ENCODE measurements at regions of chr6 and their contacts with region 1.

Region 1: GRCh38 chr6:52284460-52285176 is at the start of gene MCM3:
- DNase-seq: peak; percentile 99
- ATAC-seq: peak; percentile 97
- H3K4me3 ChIP-seq: peak within 1 kb of the TSS; percentile 88 to 92
- H3K27ac ChIP-seq: peak within 1 kb of the TSS; percentile 81
- H3K4me1 ChIP-seq: peaks cover 4 to 22% of the 10 kb centered on the region in 2 experiments; a peak in 3 of 4 replicates
- H3K27me3 ChIP-seq: no peaks in the 10 kb centered on the region
- CTCF ChIP-seq: no peak
- POLR2A ChIP-seq: no peak
- RAD21 ChIP-seq: no peak
- total RNA-seq, gene MCM3: 191 TPM

Region 2: GRCh38 chr6:52399511-52400312 is 115.1 kb after region 1 on chr6:
- CTCF ChIA-PET with region 1: interaction called, 45 read pairs
- POLR2A ChIA-PET with region 1: no interaction called
- RAD21 ChIA-PET with region 1: interaction called in 1 of 2 experiments, 9 read pairs
- intact Hi-C with region 1: loop called (anchors 1 kb)
- DNase-seq: no peak
- ATAC-seq: peak; percentile 92
- H3K4me3 ChIP-seq: no peak overlapping the region
- H3K27ac ChIP-seq: no peak overlapping the region
- H3K4me1 ChIP-seq: peaks cover 0 to 14% of the 10 kb centered on the region in 2 experiments; a peak in 2 of 4 replicates
- H3K27me3 ChIP-seq: no peaks in the 10 kb centered on the region
- CTCF ChIP-seq: peak; percentile 77 to 88 (median 85)
- POLR2A ChIP-seq: no peak
- RAD21 ChIP-seq: peak; percentile 88

Region 3: DNA sequence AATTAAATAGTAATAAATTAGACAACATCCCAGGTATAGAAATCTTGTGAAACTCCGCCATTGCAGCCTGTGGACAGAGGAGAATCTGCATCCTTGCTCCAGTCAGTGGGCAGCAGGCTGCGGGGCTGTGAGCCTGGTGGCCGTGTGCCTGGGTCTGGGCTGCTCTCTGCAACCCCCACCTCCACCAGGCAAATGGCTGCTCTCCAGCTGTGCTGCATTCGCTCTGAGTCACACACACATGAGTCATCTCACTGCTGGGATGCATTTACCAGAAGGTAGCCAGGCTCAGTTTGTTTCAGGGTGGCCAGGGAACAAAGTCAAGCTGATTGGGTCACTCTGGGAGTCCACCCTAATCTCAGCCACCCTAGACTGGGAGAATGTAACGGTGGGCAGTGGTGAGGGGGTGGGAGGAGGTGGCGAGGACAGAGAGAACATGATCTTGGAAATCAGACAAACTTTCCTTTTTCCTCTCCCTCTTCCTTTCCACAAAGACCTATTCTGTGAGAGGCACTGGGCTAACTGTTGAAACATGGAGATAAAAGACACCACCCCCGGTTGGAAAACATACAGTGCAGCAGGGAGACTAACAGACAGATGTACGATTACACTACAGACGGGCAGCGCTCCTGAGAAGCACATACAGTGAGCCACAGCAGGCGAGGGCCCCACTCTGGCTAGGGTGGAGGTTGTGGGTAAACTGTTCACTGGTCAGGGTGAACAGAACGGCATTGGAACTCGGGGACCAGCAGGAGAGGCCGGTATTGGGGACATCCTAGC is 233.1 kb after region 1 on chr6:
- CTCF ChIA-PET with region 1: no interaction called
- POLR2A ChIA-PET with region 1: no interaction called
- RAD21 ChIA-PET with region 1: no interaction called
- intact Hi-C with region 1: loop called (anchors 10 kb)
- DNase-seq: peak; percentile 80
- ATAC-seq: peak; percentile 89
- H3K4me3 ChIP-seq: peak overlapping the region in 1 of 2 experiments; percentile 36; a peak in 3 of 4 replicates
- H3K27ac ChIP-seq: peak overlapping the region; percentile 73
- H3K4me1 ChIP-seq: peaks cover 55 to 73% of the 10 kb centered on the region in 2 experiments
- H3K27me3 ChIP-seq: no peaks in the 10 kb centered on the region
- CTCF ChIP-seq: no peak
- POLR2A ChIP-seq: no peak
- RAD21 ChIP-seq: peak; percentile 31; the same call in 1 of the 2 replicates

Region 4: GRCh38 chr6:52598123-52598823 is 313.7 kb after region 1 on chr6:
- CTCF ChIA-PET with region 1: no interaction called
- POLR2A ChIA-PET with region 1: no interaction called
- RAD21 ChIA-PET with region 1: no interaction called
- intact Hi-C with region 1: loop called (anchors 10 kb)
- DNase-seq: peak; percentile 69
- ATAC-seq: peak; percentile 95
- H3K4me3 ChIP-seq: no peak overlapping the region
- H3K27ac ChIP-seq: no peak overlapping the region
- H3K4me1 ChIP-seq: peaks cover 0 to 27% of the 10 kb centered on the region in 2 experiments; a peak in 2 of 4 replicates
- H3K27me3 ChIP-seq: no peaks in the 10 kb centered on the region
- CTCF ChIP-seq: peak; percentile 72 to 85 (median 84)
- POLR2A ChIP-seq: no peak
- RAD21 ChIP-seq: peak; percentile 68